ENCODE measurements at regions of chr20 and their contacts with region 1.

Region 1: GRCh38 chr20:543369-544152 is at the start of gene CSNK2A1:
- DNase-seq: peak; percentile 95
- ATAC-seq: peak; percentile 99
- H3K4me3 ChIP-seq: peak within 1 kb of the TSS; percentile 88 to 98 (median 96)
- H3K27ac ChIP-seq: peak within 1 kb of the TSS; percentile 90
- H3K4me1 ChIP-seq: peaks cover 50% of the 10 kb centered on the region
- H3K27me3 ChIP-seq: peaks cover 0 to 7% of the 10 kb centered on the region in 2 experiments; a peak in 1 of 5 replicates
- CTCF ChIP-seq: no peak
- EP300 ChIP-seq: peak in 1 of 2 experiments; percentile 53; a peak in 1 of 4 replicates
- POLR2A ChIP-seq: peak; percentile 93 to 97
- RAD21 ChIP-seq: peak; percentile 72
- total RNA-seq, gene CSNK2A1: 231 and 288 TPM in 2 replicates

Region 2: GRCh38 chr20:454946-455345 is 88.6 kb before region 1 on chr20:
- CTCF ChIA-PET with region 1: no interaction called
- POLR2A ChIA-PET with region 1: no interaction called
- in situ Hi-C with region 1: no loop called
- intact Hi-C with region 1: no loop called
- DNase-seq: no peak
- ATAC-seq: no peak
- H3K4me3 ChIP-seq: no peak overlapping the region
- H3K27ac ChIP-seq: no peak overlapping the region
- H3K4me1 ChIP-seq: peaks cover 18% of the 10 kb centered on the region
- H3K27me3 ChIP-seq: no peaks in the 10 kb centered on the region
- CTCF ChIP-seq: no peak
- EP300 ChIP-seq: no peak
- POLR2A ChIP-seq: no peak
- RAD21 ChIP-seq: no peak

Region 3: DNA sequence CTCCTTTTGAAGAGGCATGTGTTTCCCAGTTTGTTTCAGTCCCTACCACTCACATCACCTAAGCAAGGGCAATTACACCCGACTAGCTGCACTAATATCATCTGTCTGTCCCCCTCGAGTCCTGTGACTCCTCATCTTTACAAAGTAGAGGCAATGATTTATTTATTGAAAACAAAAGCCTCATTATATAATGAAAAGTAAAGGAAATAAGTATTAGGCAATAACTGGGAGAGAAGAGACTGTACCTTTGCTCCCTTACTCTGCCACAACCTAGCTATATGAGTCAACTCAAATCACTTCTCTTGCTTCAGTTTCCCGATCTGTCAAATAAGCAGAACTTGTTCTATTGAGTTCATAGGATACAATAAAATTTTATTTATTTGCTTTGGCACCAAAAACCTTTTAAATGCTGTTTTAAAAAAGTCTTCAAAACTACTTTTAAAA is 38.9 kb before region 1 on chr20:
- CTCF ChIA-PET with region 1: no interaction called
- POLR2A ChIA-PET with region 1: interaction called, 9 read pairs
- in situ Hi-C with region 1: no loop called
- intact Hi-C with region 1: loop called (anchors 5 kb)
- DNase-seq: peak; percentile 81
- ATAC-seq: peak; percentile 84
- H3K4me3 ChIP-seq: no peak overlapping the region
- H3K27ac ChIP-seq: peak overlapping the region; percentile 60
- H3K4me1 ChIP-seq: peaks cover 55% of the 10 kb centered on the region
- H3K27me3 ChIP-seq: no peaks in the 10 kb centered on the region
- CTCF ChIP-seq: no peak
- EP300 ChIP-seq: peak in 1 of 2 experiments; percentile 56; a peak in 2 of 4 replicates
- POLR2A ChIP-seq: no peak
- RAD21 ChIP-seq: no peak

Region 4: GRCh38 chr20:513429-513828 is 30.1 kb before region 1 on chr20:
- CTCF ChIA-PET with region 1: no interaction called
- POLR2A ChIA-PET with region 1: interaction called, 23 read pairs
- in situ Hi-C with region 1: no loop called
- intact Hi-C with region 1: no loop called
- DNase-seq: no peak
- ATAC-seq: no peak
- H3K4me3 ChIP-seq: no peak overlapping the region
- H3K27ac ChIP-seq: no peak overlapping the region
- H3K4me1 ChIP-seq: peaks cover 91% of the 10 kb centered on the region
- H3K27me3 ChIP-seq: no peaks in the 10 kb centered on the region
- CTCF ChIP-seq: no peak
- EP300 ChIP-seq: no peak
- POLR2A ChIP-seq: no peak
- RAD21 ChIP-seq: no peak

Region 5: DNA sequence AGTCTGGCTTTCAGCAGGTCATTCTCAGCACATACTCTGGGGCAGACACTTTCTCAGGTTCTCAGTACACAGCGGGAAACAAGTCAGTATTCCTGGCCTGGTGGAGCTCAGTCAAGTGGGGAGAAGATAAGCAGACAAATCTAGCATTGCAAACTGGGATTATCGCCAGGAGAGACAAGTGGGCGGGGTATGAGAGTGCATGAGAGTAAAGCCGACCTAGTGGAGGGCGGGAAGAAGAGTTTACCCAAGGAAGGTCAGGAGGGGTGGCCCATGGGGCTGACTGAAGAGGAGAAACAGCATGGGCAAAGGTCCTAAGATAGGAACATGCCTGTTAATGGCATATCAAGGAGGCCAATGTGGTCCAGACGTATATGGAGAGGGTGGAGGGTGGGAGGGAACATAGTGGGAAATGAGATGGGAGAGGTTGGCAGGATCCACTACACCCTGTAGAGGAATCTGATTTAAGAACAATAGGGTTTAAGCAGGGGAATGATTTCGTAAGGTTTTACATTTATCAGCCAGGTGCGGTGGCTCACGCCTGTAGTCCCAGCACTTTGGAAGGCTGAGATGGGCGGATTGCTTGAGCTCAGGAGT is 12.5 kb after region 1 on chr20:
- CTCF ChIA-PET with region 1: no interaction called
- POLR2A ChIA-PET with region 1: interaction called, 10 read pairs
- in situ Hi-C with region 1: no loop called
- intact Hi-C with region 1: no loop called
- DNase-seq: peak; percentile 81
- ATAC-seq: peak; percentile 81
- H3K4me3 ChIP-seq: no peak overlapping the region
- H3K27ac ChIP-seq: no peak overlapping the region
- H3K4me1 ChIP-seq: peaks cover 14% of the 10 kb centered on the region
- H3K27me3 ChIP-seq: peaks cover 8 to 26% of the 10 kb centered on the region in 2 experiments; a peak in 3 of 5 replicates
- CTCF ChIP-seq: 0 out of 2 replicates have a peak, but pooled peaks have one; percentile 16
- EP300 ChIP-seq: peak in 1 of 2 experiments; percentile 27; a peak in 1 of 4 replicates
- POLR2A ChIP-seq: no peak
- RAD21 ChIP-seq: no peak

Region 6: GRCh38 chr20:645318-646106 is 102.0 kb after region 1 on chr20:
- CTCF ChIA-PET with region 1: no interaction called
- POLR2A ChIA-PET with region 1: interaction called, 19 read pairs
- in situ Hi-C with region 1: no loop called
- intact Hi-C with region 1: loop called (anchors 5 kb)
- DNase-seq: peak; percentile 90
- ATAC-seq: peak; percentile 78
- H3K4me3 ChIP-seq: peak overlapping the region; percentile 15 to 71 (median 58)
- H3K27ac ChIP-seq: peak overlapping the region; percentile 86
- H3K4me1 ChIP-seq: peaks cover 49% of the 10 kb centered on the region
- H3K27me3 ChIP-seq: no peaks in the 10 kb centered on the region
- CTCF ChIP-seq: peak; percentile 100
- EP300 ChIP-seq: peak; percentile 32 to 53; a peak in 2 of 4 replicates
- POLR2A ChIP-seq: peak; percentile 43 to 53; a peak in 2 of 4 replicates
- RAD21 ChIP-seq: peak; percentile 99

Region 7: DNA sequence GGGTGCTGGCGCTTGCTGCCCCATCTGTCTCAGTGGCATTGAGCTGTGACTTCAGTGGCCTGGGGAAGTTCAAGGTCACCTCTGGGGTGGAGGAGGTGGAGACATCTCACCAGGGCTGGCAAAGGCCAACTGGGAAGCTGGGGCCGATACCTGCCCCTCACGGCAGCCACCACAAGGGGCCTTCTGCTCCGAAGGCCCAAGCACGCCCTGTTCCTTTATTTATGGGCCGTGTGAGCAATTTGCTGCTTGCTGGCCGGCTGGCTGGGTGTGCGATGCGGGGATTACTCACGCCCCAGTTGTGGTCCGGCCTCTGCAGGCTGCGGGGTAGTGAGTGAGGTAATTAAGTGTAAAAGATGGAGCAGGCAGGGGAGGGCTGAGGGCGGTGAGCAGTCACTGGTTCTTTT is 145.2 kb after region 1 on chr20:
- CTCF ChIA-PET with region 1: no interaction called
- POLR2A ChIA-PET with region 1: no interaction called
- in situ Hi-C with region 1: no loop called
- intact Hi-C with region 1: no loop called
- DNase-seq: peak; percentile 41
- ATAC-seq: peak; percentile 92
- H3K4me3 ChIP-seq: no peak overlapping the region
- H3K27ac ChIP-seq: no peak overlapping the region
- H3K4me1 ChIP-seq: peaks cover 7% of the 10 kb centered on the region; the same call in 1 of the 2 replicates
- H3K27me3 ChIP-seq: peaks cover 3 to 42% of the 10 kb centered on the region in 2 experiments; a peak in 4 of 5 replicates
- CTCF ChIP-seq: 0 out of 2 replicates have a peak, but pooled peaks have one; percentile 17
- EP300 ChIP-seq: no peak
- POLR2A ChIP-seq: no peak
- RAD21 ChIP-seq: no peak; the same call in 1 of the 2 replicates

Measured in HepG2 (cell line).